ENCODE measurements at regions of chr19 and their contacts with region 1.

Region 1: DNA sequence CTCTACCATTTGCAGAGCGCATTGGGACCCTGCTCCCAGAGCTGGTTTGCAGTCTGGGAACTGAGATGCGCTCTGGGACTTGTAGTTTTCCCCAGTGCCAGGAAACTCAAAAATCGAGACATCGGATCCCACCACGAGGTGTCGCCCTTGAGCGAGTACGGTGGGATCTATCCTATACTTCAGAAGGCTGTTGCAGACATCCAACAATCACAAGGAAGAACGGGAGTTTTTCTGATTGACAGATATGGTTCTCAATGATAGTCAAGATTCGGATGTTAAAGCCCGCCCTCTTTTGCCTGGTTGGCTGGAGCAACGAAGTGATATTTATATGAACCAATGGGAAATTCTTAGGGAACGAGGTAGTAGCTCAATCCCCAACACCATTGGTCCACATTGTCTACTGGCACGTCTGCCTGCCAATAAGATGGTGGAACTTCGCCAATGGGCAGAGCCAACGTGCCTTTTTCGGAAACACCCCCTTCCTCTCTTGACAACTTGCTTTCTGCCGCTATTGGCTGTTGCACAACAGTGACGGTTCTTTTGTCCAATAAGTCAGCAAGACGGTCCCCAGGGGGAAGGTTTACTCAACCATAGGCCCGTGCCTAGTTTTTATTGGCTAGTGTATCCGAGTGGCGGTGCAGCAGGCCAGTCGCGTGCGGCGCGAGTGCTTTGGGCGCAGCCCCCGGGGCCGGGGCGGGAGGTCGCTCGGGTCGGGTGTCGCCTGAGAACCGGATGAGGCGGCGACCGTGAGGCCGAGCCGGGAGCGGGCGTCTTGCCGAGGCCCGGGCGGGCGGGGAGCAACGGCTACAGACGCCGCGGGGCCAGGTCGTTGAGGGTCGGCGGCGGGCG is at the start of gene DNM2:
- DNase-seq: peak; percentile 99 to 100
- H3K4me3 ChIP-seq: peak within 1 kb of the TSS; percentile 71 to 99
- H3K27ac ChIP-seq: peak within 1 kb of the TSS; percentile 79 to 92
- H3K4me1 ChIP-seq: peaks cover 0 to 12% of the 10 kb centered on the region in 2 donors
- H3K27me3 ChIP-seq: no peaks in the 10 kb centered on the region
- CTCF ChIP-seq: peak; percentile 78 to 96 (median 88)
- POLR2A ChIP-seq: peak; percentile 56 to 74
- total RNA-seq, gene DNM2: 46.8 to 150 (median 86.0) TPM

Region 2: DNA sequence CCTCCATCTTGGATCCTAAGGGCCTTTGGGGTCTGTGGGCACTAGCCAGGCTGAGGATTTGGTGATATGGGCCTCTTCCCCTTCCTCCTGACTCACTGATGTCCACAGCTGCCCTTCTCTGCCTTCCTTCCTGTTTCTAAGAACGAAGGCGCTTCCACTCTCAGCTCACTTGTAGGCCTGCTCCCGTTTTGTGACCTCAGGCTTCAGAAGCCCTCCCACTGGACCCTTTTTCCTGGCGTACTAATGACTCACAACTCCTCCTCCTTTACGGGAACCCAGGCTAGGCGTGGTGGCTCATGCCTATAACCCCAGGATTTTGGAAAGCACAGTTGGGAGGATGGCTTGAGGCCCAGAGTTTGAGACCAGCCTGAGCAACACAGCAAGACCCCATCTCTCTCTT is 62.8 kb after region 1 on chr19:
- intact Hi-C with region 1: no loop called
- DNase-seq: peak in 1 of 2 donors; percentile 58
- H3K4me3 ChIP-seq: no peak overlapping the region
- H3K27ac ChIP-seq: peak overlapping the region; percentile 44 to 50
- H3K4me1 ChIP-seq: no peaks in the 10 kb centered on the region
- H3K27me3 ChIP-seq: no peaks in the 10 kb centered on the region
- CTCF ChIP-seq: no peak
- POLR2A ChIP-seq: no peak

Region 3: DNA sequence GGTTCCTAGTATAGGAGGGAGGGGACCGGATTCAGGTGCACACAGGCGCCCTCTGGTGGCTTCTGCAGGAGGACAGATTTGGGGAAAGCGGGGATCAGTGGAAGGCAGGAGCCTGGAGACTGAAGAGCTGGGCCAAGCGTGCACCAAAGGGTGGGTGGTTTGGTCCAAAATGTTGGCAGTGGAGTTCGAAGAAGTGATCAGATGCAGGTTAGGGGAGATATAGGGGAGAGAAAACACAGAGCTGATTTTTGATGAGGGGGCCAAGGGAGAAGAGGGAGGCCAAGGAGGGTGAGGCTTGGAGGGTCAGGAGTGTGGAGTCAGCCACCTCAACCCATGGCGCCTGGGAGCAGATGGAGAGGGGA is 146.9 kb after region 1 on chr19:
- intact Hi-C with region 1: loop called (anchors 10 kb)
- DNase-seq: peak; percentile 85
- H3K4me3 ChIP-seq: no peak overlapping the region
- H3K27ac ChIP-seq: peak overlapping the region in 1 of 2 donors; percentile 2
- H3K4me1 ChIP-seq: no peaks in the 10 kb centered on the region
- H3K27me3 ChIP-seq: no peaks in the 10 kb centered on the region
- CTCF ChIP-seq: peak; percentile 77 to 91 (median 86)
- POLR2A ChIP-seq: no peak